ENCODE measurements at regions of chr12 and their contacts with region 1.

Region 1: GRCh38 chr12:77049767-77050353 is 15.5 kb downstream of the E2F7 start:
- DNase-seq: peak; percentile 44
- ATAC-seq: peak; percentile 99
- H3K4me3 ChIP-seq: no peak overlapping the region
- H3K27ac ChIP-seq: no peak overlapping the region
- H3K4me1 ChIP-seq: no peaks in the 10 kb centered on the region
- H3K27me3 ChIP-seq: no peaks in the 10 kb centered on the region
- CTCF ChIP-seq: peak; percentile 71 to 86 (median 74)
- EP300 ChIP-seq: no peak
- POLR2A ChIP-seq: no peak
- RAD21 ChIP-seq: peak; percentile 86

Region 2: GRCh38 chr12:77010691-77011548 is 38.9 kb before region 1 on chr12:
- CTCF ChIA-PET with region 1: interaction called, 12 read pairs
- POLR2A ChIA-PET with region 1: interaction called, 6 read pairs
- RAD21 ChIA-PET with region 1: no interaction called
- SMC1A ChIA-PET with region 1: interaction called, 3 read pairs
- in situ Hi-C with region 1: no loop called
- intact Hi-C with region 1: no loop called
- DNase-seq: peak; percentile 7
- ATAC-seq: peak; percentile 97
- H3K4me3 ChIP-seq: no peak overlapping the region
- H3K27ac ChIP-seq: no peak overlapping the region
- H3K4me1 ChIP-seq: no peaks in the 10 kb centered on the region
- H3K27me3 ChIP-seq: no peaks in the 10 kb centered on the region
- CTCF ChIP-seq: peak; percentile 85 to 95 (median 94)
- EP300 ChIP-seq: no peak
- POLR2A ChIP-seq: no peak
- RAD21 ChIP-seq: peak; percentile 83

Region 3: DNA sequence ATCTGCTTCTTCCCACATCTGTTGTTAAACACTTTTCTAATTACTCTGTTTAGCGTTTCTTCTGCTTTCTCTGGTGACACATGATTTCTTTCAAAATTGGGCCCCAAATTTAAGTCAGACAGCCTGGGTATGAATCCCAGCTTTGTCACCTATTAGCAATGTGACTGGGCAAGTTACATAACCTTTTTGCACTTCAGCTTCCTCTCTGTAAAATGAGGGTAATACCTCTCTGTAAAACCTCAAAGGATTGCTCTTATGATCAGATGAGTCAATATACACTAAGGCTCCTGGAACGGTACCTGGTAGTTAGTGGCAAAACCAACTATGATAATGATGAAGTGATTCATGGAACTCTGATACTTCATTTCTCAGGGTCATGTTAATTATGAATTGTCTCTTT is 17.5 kb before region 1 on chr12:
- CTCF ChIA-PET with region 1: interaction called, 10 read pairs
- POLR2A ChIA-PET with region 1: no interaction called
- RAD21 ChIA-PET with region 1: no interaction called
- SMC1A ChIA-PET with region 1: no interaction called
- in situ Hi-C with region 1: no loop called
- intact Hi-C with region 1: no loop called
- DNase-seq: no peak
- ATAC-seq: no peak
- H3K4me3 ChIP-seq: no peak overlapping the region
- H3K27ac ChIP-seq: no peak overlapping the region
- H3K4me1 ChIP-seq: no peaks in the 10 kb centered on the region
- H3K27me3 ChIP-seq: no peaks in the 10 kb centered on the region
- CTCF ChIP-seq: no peak
- EP300 ChIP-seq: no peak
- POLR2A ChIP-seq: no peak
- RAD21 ChIP-seq: no peak

Region 4: DNA sequence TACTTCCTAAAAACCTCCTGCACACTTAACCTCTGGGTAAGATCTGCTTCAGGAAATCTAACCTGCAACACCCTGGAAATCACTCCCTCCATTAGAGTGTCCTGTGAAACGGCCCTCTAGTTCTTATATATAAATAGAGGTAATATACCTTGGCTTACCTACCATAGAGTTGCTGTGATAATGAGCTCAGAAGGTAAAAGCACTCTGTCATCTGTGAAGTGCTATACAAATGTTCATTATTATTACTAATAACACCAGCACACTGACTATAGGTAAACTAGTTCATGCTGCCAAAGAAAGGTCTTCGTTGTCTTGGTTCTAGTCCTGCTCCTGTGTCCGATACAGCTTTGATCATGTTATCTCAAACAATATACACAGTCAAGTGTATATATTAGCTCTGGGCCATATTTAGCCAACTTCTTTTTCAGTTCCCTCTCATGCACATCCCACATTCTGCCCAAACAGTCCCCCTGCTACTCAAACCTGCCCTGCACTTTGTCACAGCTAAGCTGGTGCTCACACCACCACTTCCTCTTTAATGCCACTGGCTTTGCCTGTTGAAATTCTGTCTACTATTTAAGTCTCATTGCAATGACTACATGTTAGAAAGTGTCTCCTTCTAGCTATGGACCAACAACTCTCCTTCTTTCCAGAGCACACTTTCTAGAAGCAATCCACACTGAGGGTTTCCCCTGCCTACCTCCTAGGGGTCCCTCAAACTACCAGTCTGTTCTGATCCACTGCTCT is 10.4 kb after region 1 on chr12:
- CTCF ChIA-PET with region 1: interaction called, 45 read pairs
- POLR2A ChIA-PET with region 1: interaction called, 18 read pairs
- RAD21 ChIA-PET with region 1: interaction called, 17 read pairs
- SMC1A ChIA-PET with region 1: interaction called, 40 read pairs
- in situ Hi-C with region 1: no loop called
- intact Hi-C with region 1: no loop called
- DNase-seq: peak; percentile 85
- ATAC-seq: peak; percentile 78
- H3K4me3 ChIP-seq: peak overlapping the region; percentile 43
- H3K27ac ChIP-seq: peak overlapping the region; percentile 89
- H3K4me1 ChIP-seq: peaks cover 29% of the 10 kb centered on the region
- H3K27me3 ChIP-seq: no peaks in the 10 kb centered on the region
- CTCF ChIP-seq: no peak
- EP300 ChIP-seq: peak; percentile 70 to 86; a peak in 3 of 4 replicates
- POLR2A ChIP-seq: peak; percentile 24; the same call in 1 of the 2 replicates
- RAD21 ChIP-seq: no peak

Region 5: GRCh38 chr12:77065361-77066204 is 15.7 kb after region 1 on chr12 and contains the start of gene E2F7:
- CTCF ChIA-PET with region 1: interaction called, 45 read pairs
- POLR2A ChIA-PET with region 1: interaction called, 18 read pairs
- RAD21 ChIA-PET with region 1: interaction called, 17 read pairs
- SMC1A ChIA-PET with region 1: interaction called, 40 read pairs
- in situ Hi-C with region 1: no loop called
- intact Hi-C with region 1: no loop called
- DNase-seq: peak; percentile 56
- ATAC-seq: peak; percentile 84
- H3K4me3 ChIP-seq: peak within 1 kb of the TSS; percentile 91
- H3K27ac ChIP-seq: peak within 1 kb of the TSS; percentile 79
- H3K4me1 ChIP-seq: peaks cover 23% of the 10 kb centered on the region
- H3K27me3 ChIP-seq: no peaks in the 10 kb centered on the region
- CTCF ChIP-seq: no peak
- EP300 ChIP-seq: no peak
- POLR2A ChIP-seq: peak; percentile 88
- RAD21 ChIP-seq: no peak
- polyA plus RNA-seq, gene E2F7: 5.6 to 7.0 TPM

Region 6: GRCh38 chr12:77324763-77325468 is 275.1 kb after region 1 on chr12:
- CTCF ChIA-PET with region 1: interaction called, 4 read pairs
- POLR2A ChIA-PET with region 1: no interaction called
- RAD21 ChIA-PET with region 1: no interaction called
- SMC1A ChIA-PET with region 1: no interaction called
- in situ Hi-C with region 1: no loop called
- intact Hi-C with region 1: loop called (anchors 10 kb)
- DNase-seq: no peak
- ATAC-seq: peak; percentile 96
- H3K4me3 ChIP-seq: peak overlapping the region; percentile 53
- H3K27ac ChIP-seq: no peak overlapping the region
- H3K4me1 ChIP-seq: no peaks in the 10 kb centered on the region; the same call in none of the 2 replicates
- H3K27me3 ChIP-seq: peaks cover 0 to 6% of the 10 kb centered on the region in 2 experiments; a peak in 1 of 4 replicates
- CTCF ChIP-seq: peak; percentile 34 to 46 (median 39); a peak in 5 of 6 replicates
- EP300 ChIP-seq: no peak
- POLR2A ChIP-seq: no peak
- RAD21 ChIP-seq: peak; percentile 38; the same call in 1 of the 2 replicates

Region 7: GRCh38 chr12:77685112-77685511 is 635.3 kb after region 1 on chr12:
- CTCF ChIA-PET with region 1: interaction called, 15 read pairs
- POLR2A ChIA-PET with region 1: no interaction called
- RAD21 ChIA-PET with region 1: no interaction called
- SMC1A ChIA-PET with region 1: no interaction called
- in situ Hi-C with region 1: loop called (anchors 5 kb)
- intact Hi-C with region 1: loop called (anchors 10 kb)
- DNase-seq: peak; percentile 7
- ATAC-seq: peak; percentile 83
- H3K4me3 ChIP-seq: no peak overlapping the region
- H3K27ac ChIP-seq: no peak overlapping the region
- H3K4me1 ChIP-seq: no peaks in the 10 kb centered on the region
- H3K27me3 ChIP-seq: no peaks in the 10 kb centered on the region
- CTCF ChIP-seq: peak; percentile 43 to 69 (median 54); a peak in 4 of 6 replicates
- EP300 ChIP-seq: no peak
- POLR2A ChIP-seq: no peak
- RAD21 ChIP-seq: peak; percentile 59

Measured in GM12878 (cell line).